Lower leg skin (tissue), 4 donors: ENCODE measurements at regions of chr16 and their contacts with region 1.

Region 1: GRCh38 chr16:9549487-9549886 is 458.0 kb downstream of the HAPSTR1 start:
- DNase-seq: no peak
- H3K4me3 ChIP-seq: no peak overlapping the region
- CTCF ChIP-seq: no peak
- POLR2A ChIP-seq: no peak

Region 2: GRCh38 chr16:9509663-9510062 is 39.8 kb before region 1 on chr16:
- intact Hi-C with region 1: loop called (anchors 1 kb)
- DNase-seq: no peak
- H3K4me3 ChIP-seq: no peak overlapping the region
- CTCF ChIP-seq: no peak
- POLR2A ChIP-seq: no peak

Region 3: DNA sequence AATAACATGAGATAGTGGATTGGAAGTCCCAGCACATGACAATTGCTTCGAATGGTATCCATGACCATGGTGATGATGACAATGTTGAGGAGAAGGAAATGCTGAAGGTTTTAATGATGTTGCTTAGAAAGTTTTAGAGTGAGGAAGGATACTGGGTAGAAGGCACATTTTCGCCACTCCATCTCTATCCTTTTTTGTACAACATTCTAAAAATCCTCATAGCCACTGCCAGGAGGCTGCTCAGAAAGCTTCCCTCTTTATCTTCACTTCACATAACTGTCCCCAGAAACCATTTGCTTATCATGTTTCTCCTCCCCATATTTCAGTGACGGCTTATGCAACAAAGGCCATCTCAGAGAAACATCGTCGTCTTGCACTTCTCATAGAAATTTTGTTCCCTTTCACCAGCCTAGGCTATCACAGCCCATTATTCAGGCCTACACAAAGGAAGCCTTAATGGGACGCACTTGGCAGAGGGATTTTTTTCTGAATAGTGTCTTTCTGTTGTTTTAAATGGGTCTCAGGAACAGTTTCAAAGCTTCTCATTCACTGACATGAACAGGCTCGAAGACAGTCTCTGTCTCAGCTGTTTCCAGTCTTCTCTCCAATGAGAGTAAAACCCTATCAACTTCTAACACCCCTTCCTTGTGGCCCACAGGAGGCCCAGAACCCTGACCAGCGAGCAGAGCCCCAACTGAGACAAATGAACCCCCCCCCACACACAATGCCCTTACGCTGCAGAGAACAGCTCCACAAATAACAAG is 48.7 kb after region 1 on chr16:
- intact Hi-C with region 1: no loop called
- DNase-seq: no peak
- H3K4me3 ChIP-seq: no peak overlapping the region
- CTCF ChIP-seq: no peak
- POLR2A ChIP-seq: no peak